Activated B cell treated with CpG ODN at 0.5 μM for 24 hours (primary cell): ENCODE measurements at regions of chr2 and their contacts with region 1.

Region 1: DNA sequence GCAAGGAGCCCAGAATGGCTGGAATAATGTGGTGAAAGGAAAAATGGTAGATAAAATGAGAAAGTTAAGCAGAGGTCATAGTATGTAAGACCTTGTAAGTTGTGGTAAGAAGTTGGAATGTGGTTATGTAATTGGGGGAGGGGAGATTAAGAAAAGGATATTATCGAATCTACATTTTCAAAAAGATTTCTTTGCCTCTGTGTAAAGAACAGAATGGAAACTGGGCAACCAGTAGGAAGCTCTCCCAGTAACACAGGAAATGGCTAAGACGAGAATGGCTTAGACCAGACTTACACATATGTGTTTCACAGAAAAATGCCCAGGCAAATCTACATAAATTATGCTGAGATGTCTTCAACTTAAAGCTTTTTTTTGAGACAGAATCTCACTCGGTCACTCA is 13.2 kb downstream of the MEMO1 start:
- DNase-seq: no peak
- ATAC-seq: no peak
- H3K4me3 Mint-ChIP-seq: no peak overlapping the region
- H3K27ac Mint-ChIP-seq: peak overlapping the region; percentile 0
- H3K4me1 Mint-ChIP-seq: peaks cover 62% of the 10 kb centered on the region
- H3K27me3 Mint-ChIP-seq: no peaks in the 10 kb centered on the region
- CTCF ChIP-seq: no peak

Region 2: GRCh38 chr2:31980674-31981356 is 16.8 kb before region 1 on chr2:
- CTCF ChIA-PET with region 1: no interaction called
- POLR2A ChIA-PET with region 1: no interaction called
- intact Hi-C with region 1: loop called (anchors 2 kb)
- DNase-seq: no peak
- ATAC-seq: peak; percentile 99
- H3K4me3 Mint-ChIP-seq: peak overlapping the region; percentile 56
- H3K27ac Mint-ChIP-seq: peak overlapping the region; percentile 87
- H3K4me1 Mint-ChIP-seq: peaks cover 34% of the 10 kb centered on the region
- H3K27me3 Mint-ChIP-seq: no peaks in the 10 kb centered on the region
- CTCF ChIP-seq: no peak

Region 3: DNA sequence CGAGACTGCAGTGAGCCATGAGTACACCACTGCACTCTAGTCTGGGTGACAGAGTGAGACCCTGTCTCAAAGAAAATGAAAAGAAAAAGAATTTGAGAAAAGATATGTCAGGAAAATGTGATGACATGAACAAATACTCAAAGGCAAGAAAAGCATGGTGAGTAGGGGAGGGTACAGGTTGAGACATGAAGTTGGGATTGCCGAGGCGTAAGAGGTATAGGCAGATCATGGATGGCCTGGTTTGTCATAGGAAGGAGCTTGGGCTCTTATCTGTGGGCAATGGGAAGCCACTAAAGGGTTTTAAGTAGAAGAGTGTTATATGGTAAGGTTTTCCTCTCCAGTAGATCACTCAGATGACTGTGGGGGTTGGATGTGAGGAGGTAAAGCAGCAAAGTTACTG is 98.0 kb after region 1 on chr2:
- CTCF ChIA-PET with region 1: no interaction called
- POLR2A ChIA-PET with region 1: no interaction called
- intact Hi-C with region 1: no loop called
- DNase-seq: no peak
- ATAC-seq: no peak
- H3K4me3 Mint-ChIP-seq: no peak overlapping the region
- H3K27ac Mint-ChIP-seq: peak overlapping the region; percentile 1
- H3K4me1 Mint-ChIP-seq: no peaks in the 10 kb centered on the region
- H3K27me3 Mint-ChIP-seq: no peaks in the 10 kb centered on the region
- CTCF ChIP-seq: no peak